ENCODE measurements at regions of chr22 and their contacts with region 1.

Region 1: GRCh38 chr22:39446295-39446721 is 10.5 kb upstream of the MGAT3 start:
- DNase-seq: peak; percentile 79
- H3K4me3 ChIP-seq: peak overlapping the region; percentile 74
- H3K27ac ChIP-seq: peak overlapping the region; percentile 96
- H3K4me1 ChIP-seq: peaks cover 98% of the 10 kb centered on the region
- CTCF ChIP-seq: peak; percentile 36; the same call in 1 of the 2 replicates

Region 2: DNA sequence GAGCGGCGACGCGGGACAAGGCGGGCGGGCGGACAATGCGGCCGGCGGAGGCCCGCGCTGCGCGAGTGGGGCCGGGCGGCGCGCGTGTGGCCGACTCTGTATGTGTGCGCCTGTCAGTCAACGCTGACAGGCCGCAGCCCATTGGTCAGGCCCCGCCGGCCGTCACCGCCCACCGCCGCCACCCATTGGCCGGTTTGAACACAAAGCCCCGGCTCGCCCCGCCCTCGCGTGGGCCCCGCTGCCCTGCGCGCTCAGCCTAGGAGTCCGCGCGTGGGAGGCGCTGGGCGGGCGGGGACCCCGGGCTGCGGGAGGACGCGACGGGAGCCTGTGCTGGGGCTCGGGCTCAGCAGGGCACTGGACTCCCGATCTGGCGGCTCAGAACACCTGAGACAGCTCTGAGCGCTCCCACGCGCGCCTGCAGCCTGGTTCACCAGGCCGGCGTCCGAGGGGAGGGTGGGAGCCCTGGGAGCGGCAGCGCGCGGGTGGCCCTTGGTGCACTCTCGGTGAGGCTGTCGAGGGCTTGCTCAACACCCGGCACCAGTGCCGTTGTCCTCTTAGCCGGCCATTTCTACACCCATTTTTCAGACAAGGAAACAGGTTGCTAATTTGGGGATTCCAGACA is 690.3 kb before region 1 on chr22 and contains the start of gene SUN2:
- CTCF ChIA-PET with region 1: no interaction called
- POLR2A ChIA-PET with region 1: no interaction called
- intact Hi-C with region 1: loop called (anchors 10 kb)
- DNase-seq: peak; percentile 88
- H3K4me3 ChIP-seq: peak within 1 kb of the TSS; percentile 94
- H3K27ac ChIP-seq: peak within 1 kb of the TSS; percentile 79
- H3K4me1 ChIP-seq: peaks cover 52% of the 10 kb centered on the region
- CTCF ChIP-seq: no peak
- total RNA-seq, gene SUN2: 59.1 and 67.6 TPM in 2 replicates

Region 3: GRCh38 chr22:39343259-39344048 is 102.9 kb before region 1 on chr22:
- CTCF ChIA-PET with region 1: no interaction called
- POLR2A ChIA-PET with region 1: no interaction called
- intact Hi-C with region 1: loop called (anchors 10 kb)
- DNase-seq: peak; percentile 69
- H3K4me3 ChIP-seq: no peak overlapping the region
- H3K27ac ChIP-seq: no peak overlapping the region
- H3K4me1 ChIP-seq: peaks cover 5% of the 10 kb centered on the region
- CTCF ChIP-seq: peak; percentile 92

Region 4: DNA sequence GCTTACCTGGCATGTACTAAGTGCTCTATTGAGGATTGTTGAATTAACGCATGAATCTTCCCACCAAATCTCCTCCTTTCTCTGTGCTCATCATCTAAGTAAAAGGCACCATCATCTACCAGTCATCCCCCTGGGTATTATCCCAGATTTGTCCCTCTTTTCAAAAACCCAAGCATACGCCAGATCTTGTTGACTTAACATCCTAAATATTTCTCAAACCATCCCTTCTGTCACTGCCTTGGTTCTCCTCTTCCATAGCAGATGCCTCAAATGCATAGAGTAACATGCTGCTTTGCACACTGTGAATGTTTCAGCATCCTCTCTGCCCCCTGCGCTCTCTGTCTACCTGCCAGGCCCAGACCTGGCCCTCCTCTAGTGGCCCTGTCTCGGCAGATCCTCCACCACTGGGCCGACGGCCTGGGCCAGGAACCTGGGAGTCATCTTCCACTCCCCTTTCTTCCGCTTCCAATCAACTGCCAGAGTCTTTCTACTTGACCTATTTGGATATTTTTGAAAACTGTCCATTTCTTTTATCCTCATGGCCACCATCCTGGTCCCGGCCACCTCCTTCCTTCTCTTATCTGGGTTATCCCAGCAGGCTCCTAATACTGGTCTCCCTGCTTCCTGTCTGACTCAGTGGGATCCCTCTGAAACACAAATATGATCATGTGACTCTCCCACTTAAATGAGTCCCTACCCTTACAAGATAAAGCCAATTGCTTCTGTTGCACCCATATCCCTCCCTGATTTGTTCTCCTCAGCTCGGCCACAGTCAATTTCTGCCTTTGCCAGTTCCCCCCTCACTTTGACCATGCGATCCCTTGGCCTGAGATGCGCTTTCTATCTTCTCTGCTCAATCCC is 50.1 kb before region 1 on chr22:
- CTCF ChIA-PET with region 1: no interaction called
- POLR2A ChIA-PET with region 1: no interaction called
- intact Hi-C with region 1: loop called (anchors 5 kb)
- DNase-seq: no peak
- H3K4me3 ChIP-seq: no peak overlapping the region
- H3K27ac ChIP-seq: no peak overlapping the region
- H3K4me1 ChIP-seq: peaks cover 13% of the 10 kb centered on the region
- CTCF ChIP-seq: no peak

Region 5: DNA sequence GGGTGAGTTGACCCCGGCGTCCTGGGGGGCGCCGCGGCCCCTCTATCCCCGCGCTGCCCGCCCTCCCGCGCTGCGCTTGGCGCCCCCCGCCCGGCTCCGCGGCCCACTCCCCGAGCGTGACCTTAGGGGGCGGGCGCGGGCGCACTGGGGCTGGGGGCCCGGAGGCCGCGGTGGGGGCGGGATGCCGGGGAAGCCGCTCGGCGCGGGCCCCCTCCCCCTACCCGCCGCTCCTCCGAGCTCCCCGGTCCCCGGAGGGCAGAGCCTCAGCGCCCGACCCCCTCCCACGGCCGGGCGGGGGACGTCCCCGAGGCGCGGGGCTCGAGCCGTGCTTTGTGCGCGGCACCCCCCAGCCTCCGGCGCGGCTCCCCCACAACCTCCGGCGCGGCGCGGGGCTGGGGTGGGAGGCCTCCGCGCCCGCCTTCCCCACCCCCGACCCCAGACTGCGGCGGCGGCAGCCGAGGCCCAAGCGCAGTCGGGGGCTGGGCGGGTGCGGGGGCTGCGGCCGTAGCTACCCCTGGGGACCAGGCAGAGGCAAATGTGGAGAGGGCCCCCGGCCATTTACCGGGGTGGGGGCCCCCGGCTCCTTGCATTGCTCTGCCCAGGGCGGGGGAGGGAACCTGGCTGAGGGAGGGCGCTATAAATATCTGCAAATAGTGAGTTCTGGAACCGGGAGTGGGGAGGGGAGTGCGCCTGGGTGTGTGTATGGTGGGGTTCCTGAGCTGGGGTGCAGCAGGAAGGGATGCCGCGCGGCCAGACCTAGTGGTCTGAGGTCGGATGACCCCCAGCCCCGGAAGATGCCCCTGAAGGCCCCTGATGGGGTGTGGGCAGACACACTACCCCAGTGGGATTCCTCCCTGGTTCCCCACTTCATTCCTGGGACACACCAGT is 11.5 kb after region 1 on chr22:
- CTCF ChIA-PET with region 1: no interaction called
- POLR2A ChIA-PET with region 1: interaction called, 4 read pairs
- intact Hi-C with region 1: loop called (anchors 1 kb)
- DNase-seq: no peak
- H3K4me3 ChIP-seq: peak overlapping the region; percentile 76
- H3K27ac ChIP-seq: peak overlapping the region; percentile 54
- H3K4me1 ChIP-seq: peaks cover 66% of the 10 kb centered on the region
- CTCF ChIP-seq: no peak

Region 6: GRCh38 chr22:39463901-39464390 is 17.6 kb after region 1 on chr22:
- CTCF ChIA-PET with region 1: no interaction called
- POLR2A ChIA-PET with region 1: interaction called, 10 read pairs
- intact Hi-C with region 1: loop called (anchors 2 kb)
- DNase-seq: no peak
- H3K4me3 ChIP-seq: peak overlapping the region; percentile 2
- H3K27ac ChIP-seq: peak overlapping the region; percentile 93
- H3K4me1 ChIP-seq: peaks cover 98% of the 10 kb centered on the region
- CTCF ChIP-seq: no peak